ENCODE measurements at regions of chr19 and their contacts with region 1.

Region 1: GRCh38 chr19:55809381-55810058 is 22.3 kb downstream of the NLRP11 start:
- DNase-seq: peak; percentile 77 to 89 (median 80)
- ATAC-seq: peak; percentile 100
- H3K4me3 ChIP-seq: no peak overlapping the region
- H3K27ac ChIP-seq: no peak overlapping the region
- H3K4me1 ChIP-seq: peaks cover 0 to 2% of the 10 kb centered on the region in 2 experiments; a peak in 1 of 5 replicates
- H3K27me3 ChIP-seq: peaks cover 0 to 2% of the 10 kb centered on the region in 2 experiments; a peak in 1 of 5 replicates
- CTCF ChIP-seq: peak; percentile 82 to 87 (median 85)
- EP300 ChIP-seq: 0 out of 2 replicates have a peak, but pooled peaks have one; percentile 8
- POLR2A ChIP-seq: no peak
- RAD21 ChIP-seq: peak; percentile 32 to 81; a peak in 3 of 4 replicates

Region 2: DNA sequence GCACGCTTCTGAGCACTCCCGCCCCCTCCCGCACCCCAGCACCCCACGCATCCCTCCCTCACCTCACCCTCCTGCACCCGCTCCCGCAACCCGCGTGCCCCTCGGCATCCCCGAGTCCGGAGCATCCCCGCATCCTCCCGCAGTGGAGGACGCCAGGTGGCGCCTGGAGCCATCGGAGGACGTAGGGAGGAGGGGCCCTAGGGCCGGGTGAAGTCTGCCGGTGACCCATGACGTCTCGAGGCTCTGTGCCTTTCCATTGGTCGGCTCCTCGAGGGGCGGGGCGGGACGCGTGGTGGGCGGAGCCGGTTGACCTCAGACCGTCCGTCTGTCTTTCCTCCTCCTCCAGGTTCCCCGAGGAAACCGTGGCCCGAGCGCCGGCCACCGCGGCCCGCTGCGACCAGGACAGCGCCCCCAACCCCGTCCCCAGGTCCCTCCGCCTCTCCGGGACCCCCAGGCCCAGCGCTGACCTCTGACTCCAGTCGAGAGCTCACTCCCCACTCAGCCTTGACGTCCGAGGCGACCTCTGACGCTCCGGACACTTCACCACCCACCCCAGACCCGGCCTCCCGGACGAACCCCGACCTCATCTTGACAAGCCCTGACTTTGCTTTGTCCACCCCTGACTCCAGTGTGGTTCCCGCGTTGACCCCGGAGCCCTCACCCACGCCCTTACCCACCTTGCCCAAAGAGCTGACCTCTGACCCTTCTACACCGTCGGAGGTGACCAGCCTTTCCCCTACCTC is 292.5 kb before region 1 on chr19:
- CTCF ChIA-PET with region 1: no interaction called
- POLR2A ChIA-PET with region 1: no interaction called
- in situ Hi-C with region 1: loop called (anchors 10 kb)
- intact Hi-C with region 1: no loop called
- DNase-seq: peak; percentile 95 to 100 (median 100)
- ATAC-seq: peak; percentile 100
- H3K4me3 ChIP-seq: peak overlapping the region; percentile 42
- H3K27ac ChIP-seq: peak overlapping the region; percentile 76
- H3K4me1 ChIP-seq: peaks cover 3 to 22% of the 10 kb centered on the region in 2 experiments; a peak in 3 of 5 replicates
- H3K27me3 ChIP-seq: peaks cover 3 to 16% of the 10 kb centered on the region in 2 experiments; a peak in 3 of 5 replicates
- CTCF ChIP-seq: peak; percentile 90 to 96 (median 96)
- EP300 ChIP-seq: no peak
- POLR2A ChIP-seq: 0 out of 2 replicates have a peak, but pooled peaks have one; percentile 49
- RAD21 ChIP-seq: peak; percentile 98 to 99

Region 3: DNA sequence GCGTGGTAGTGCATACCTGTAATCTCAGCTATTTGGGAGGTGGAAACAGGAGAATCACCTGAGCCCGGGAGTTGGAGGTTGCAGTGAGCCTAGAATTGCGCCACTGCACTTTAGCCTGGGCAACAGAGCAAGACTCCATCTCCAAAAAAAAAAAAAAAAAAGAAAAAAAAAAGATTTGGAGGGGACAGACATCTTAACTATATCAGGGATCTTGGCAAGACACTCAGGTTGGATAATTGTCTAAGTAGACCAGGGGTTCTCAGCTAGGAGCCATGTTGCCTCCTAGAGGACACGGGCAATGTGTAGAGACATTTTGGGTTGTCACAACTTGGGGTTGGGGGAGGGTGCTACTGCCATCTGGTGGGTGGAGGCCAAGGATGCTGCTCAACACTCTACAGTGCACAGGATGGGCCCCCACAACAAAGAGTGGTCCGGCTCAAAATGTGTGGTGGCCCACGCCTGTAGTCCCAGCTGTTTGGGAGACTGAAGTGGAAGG is 170.6 kb before region 1 on chr19:
- CTCF ChIA-PET with region 1: no interaction called
- POLR2A ChIA-PET with region 1: no interaction called
- in situ Hi-C with region 1: loop called (anchors 5 kb)
- intact Hi-C with region 1: no loop called
- DNase-seq: peak in 2 of 4 experiments; percentile 36 to 78
- ATAC-seq: peak; percentile 32
- H3K4me3 ChIP-seq: no peak overlapping the region
- H3K27ac ChIP-seq: peak overlapping the region; percentile 74; the same call in 2 of the 3 replicates
- H3K4me1 ChIP-seq: peaks cover 36 to 59% of the 10 kb centered on the region in 2 experiments
- H3K27me3 ChIP-seq: no peaks in the 10 kb centered on the region
- CTCF ChIP-seq: peak; percentile 73 to 94 (median 77)
- EP300 ChIP-seq: 0 out of 2 replicates have a peak, but pooled peaks have one; percentile 26
- POLR2A ChIP-seq: no peak
- RAD21 ChIP-seq: peak in 1 of 2 experiments; percentile 23; a peak in 2 of 4 replicates

Region 4: DNA sequence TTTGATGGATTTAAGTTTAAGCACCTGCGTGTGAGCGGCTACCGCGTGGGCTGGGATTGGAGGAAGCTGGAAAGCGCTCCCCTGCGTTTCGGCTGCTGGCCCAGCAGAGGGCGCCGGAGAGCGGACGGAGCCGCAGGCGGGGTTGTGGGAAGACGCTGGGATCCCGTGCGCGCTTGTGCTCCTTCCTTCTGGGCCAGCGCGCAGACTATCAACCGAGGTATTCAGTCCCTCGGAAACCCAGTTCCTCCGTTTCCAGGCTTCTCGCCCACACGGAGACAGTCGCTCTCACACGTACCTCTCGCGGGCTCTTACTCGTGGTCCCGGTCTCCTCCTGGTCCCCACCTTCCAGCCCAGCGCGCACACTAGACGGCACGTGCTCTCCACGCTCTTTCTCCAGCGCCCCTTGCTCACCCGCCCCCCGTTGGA is 105.7 kb before region 1 on chr19:
- CTCF ChIA-PET with region 1: no interaction called
- POLR2A ChIA-PET with region 1: no interaction called
- in situ Hi-C with region 1: no loop called
- intact Hi-C with region 1: loop called (anchors 10 kb)
- DNase-seq: peak; percentile 69 to 83 (median 80)
- ATAC-seq: peak; percentile 88
- H3K4me3 ChIP-seq: no peak overlapping the region
- H3K27ac ChIP-seq: no peak overlapping the region
- H3K4me1 ChIP-seq: peaks cover 10 to 28% of the 10 kb centered on the region in 2 experiments; a peak in 4 of 5 replicates
- H3K27me3 ChIP-seq: no peaks in the 10 kb centered on the region
- CTCF ChIP-seq: peak; percentile 77 to 87 (median 86)
- EP300 ChIP-seq: no peak
- POLR2A ChIP-seq: no peak
- RAD21 ChIP-seq: peak in 1 of 2 experiments; percentile 30; a peak in 1 of 4 replicates

Region 5: GRCh38 chr19:55777528-55777927 is 32.0 kb before region 1 on chr19:
- CTCF ChIA-PET with region 1: no interaction called
- POLR2A ChIA-PET with region 1: no interaction called
- in situ Hi-C with region 1: no loop called
- intact Hi-C with region 1: loop called (anchors 2 kb)
- DNase-seq: peak; percentile 36 to 59 (median 39)
- ATAC-seq: peak; percentile 80
- H3K4me3 ChIP-seq: no peak overlapping the region
- H3K27ac ChIP-seq: no peak overlapping the region
- H3K4me1 ChIP-seq: no peaks in the 10 kb centered on the region
- H3K27me3 ChIP-seq: peaks cover 8 to 34% of the 10 kb centered on the region in 2 experiments
- CTCF ChIP-seq: peak; percentile 69 to 83 (median 73)
- EP300 ChIP-seq: no peak
- POLR2A ChIP-seq: no peak
- RAD21 ChIP-seq: peak in 1 of 2 experiments; percentile 60; a peak in 2 of 4 replicates